Activated CD4-positive, alpha-beta T cell treated with anti-CD3 and anti-CD28 coated beads, Interleukin-2, amount 10 ng/mL, durations not matched to agents 7 days and 5 days (primary cell): ENCODE measurements at regions of chr6 and their contacts with region 1.

Region 1: GRCh38 chr6:143545976-143546547 is 34.5 kb upstream of the FUCA2 start:
- DNase-seq: no peak
- H3K4me3 Mint-ChIP-seq: peak overlapping the region; percentile 52
- H3K27ac Mint-ChIP-seq: peak overlapping the region; percentile 88
- H3K4me1 Mint-ChIP-seq: peaks cover 84% of the 10 kb centered on the region
- H3K27me3 Mint-ChIP-seq: no peaks in the 10 kb centered on the region

Region 2: DNA sequence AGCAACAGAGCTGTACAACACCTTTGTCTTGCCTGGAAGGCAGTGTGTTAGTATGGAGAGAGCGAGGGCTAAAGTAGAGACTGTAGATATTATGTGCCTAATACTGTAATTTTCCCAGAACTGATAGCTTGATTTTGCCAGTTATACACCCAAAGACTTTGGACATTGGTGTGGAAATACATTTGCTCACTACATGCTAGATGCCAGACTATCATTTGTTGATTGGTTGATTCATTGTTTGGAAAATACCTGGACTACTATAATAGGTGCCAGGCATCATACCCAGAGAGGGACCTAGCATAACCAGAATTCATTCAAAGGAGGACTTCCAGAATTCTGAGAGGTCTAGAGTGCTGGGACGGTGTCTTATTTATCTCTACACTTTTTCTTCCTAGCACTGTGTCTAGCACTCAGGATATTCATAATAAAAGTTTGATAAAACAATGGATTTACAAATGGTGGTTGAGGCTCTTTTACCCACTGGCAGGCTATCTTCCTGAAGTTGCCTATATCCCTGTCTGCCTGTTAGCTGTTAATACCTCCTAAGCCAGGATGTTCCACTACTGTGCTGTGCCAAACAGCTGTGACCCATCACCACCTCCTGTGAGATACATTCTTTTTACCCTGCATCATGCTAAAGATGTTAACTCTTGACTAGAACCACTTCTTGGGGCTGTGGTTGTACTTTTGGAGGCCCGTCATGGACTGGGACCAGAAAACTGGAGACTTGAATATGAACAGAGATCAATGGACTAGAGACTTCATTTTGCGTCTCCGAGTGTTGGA is 37.7 kb after region 1 on chr6:
- CTCF ChIA-PET with region 1: no interaction called
- POLR2A ChIA-PET with region 1: no interaction called
- DNase-seq: no peak
- H3K4me3 Mint-ChIP-seq: no peak overlapping the region
- H3K27ac Mint-ChIP-seq: no peak overlapping the region
- H3K4me1 Mint-ChIP-seq: peaks cover 10% of the 10 kb centered on the region
- H3K27me3 Mint-ChIP-seq: no peaks in the 10 kb centered on the region

Region 3: DNA sequence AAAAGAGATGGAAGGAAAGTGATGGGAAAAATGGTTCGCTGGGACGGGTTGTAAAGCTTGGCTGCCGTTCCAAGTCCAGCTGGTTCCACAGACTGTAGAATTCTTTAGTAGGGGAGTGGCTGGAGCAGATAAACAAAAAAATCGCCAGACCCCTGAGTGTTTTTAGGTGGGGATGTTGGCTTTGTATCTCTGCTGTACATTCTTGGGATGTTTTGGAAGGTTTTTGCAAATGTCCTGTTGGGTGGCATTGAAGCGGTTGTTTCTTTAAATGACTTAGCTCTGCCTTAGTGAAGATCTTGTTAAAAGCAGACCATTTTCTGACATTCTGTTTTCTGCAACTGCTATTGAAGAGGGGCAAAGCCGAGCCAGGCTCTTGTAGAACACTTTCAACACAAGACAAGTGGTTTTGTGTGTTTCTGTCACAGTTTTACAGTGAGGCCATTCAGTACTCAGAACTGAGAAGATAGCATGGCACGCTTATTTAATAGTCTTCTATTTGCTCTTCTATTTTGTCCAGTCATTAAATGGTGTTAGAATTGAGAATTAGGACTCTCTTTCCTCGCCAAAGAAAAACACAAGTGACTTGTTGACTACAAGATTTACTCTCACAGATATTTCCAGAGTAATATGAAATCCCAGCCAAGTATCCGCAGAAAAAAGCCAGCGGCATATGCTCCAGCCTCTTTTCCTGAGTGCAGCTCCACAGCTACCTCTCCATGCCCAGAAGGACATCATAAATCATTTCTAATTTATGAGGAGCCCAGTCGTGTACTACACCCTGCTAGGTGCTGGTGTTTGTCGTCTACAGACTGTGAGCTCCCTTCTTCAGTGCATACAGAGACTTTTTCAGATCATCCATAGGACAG is 197.5 kb after region 1 on chr6:
- CTCF ChIA-PET with region 1: no interaction called
- POLR2A ChIA-PET with region 1: interaction called, 12 read pairs
- DNase-seq: no peak
- H3K4me3 Mint-ChIP-seq: no peak overlapping the region
- H3K27ac Mint-ChIP-seq: no peak overlapping the region
- H3K4me1 Mint-ChIP-seq: peaks cover 10% of the 10 kb centered on the region
- H3K27me3 Mint-ChIP-seq: no peaks in the 10 kb centered on the region